ENCODE measurements at regions of chr11 and their contacts with region 1.

Region 1: GRCh38 chr11:9757809-9758636 is 94.1 kb downstream of the SWAP70 start:
- DNase-seq: peak; percentile 90 to 95 (median 94)
- ATAC-seq: peak; percentile 82
- H3K4me3 ChIP-seq: peak overlapping the region; percentile 45
- H3K4me1 ChIP-seq: peaks cover 26% of the 10 kb centered on the region
- CTCF ChIP-seq: peak; percentile 85

Region 2: GRCh38 chr11:9972989-9973388 is 215.0 kb after region 1 on chr11:
- intact Hi-C with region 1: loop called (anchors 10 kb)
- DNase-seq: peak in 1 of 3 donors; percentile 57
- ATAC-seq: peak; percentile 60
- H3K4me3 ChIP-seq: no peak overlapping the region
- H3K4me1 ChIP-seq: no peaks in the 10 kb centered on the region
- CTCF ChIP-seq: peak; percentile 41

Region 3: GRCh38 chr11:10322830-10323792 is 565.1 kb after region 1 on chr11:
- intact Hi-C with region 1: loop called in 1 of 2 experiments (anchors 10 kb)
- DNase-seq: peak in 2 of 3 donors; percentile 48 to 71
- ATAC-seq: peak; percentile 64
- H3K4me3 ChIP-seq: no peak overlapping the region
- H3K4me1 ChIP-seq: peaks cover 14% of the 10 kb centered on the region
- CTCF ChIP-seq: no peak